CD14-positive monocyte (primary cell): ENCODE measurements at regions of chr22 and their contacts with region 1.

Region 1: GRCh38 chr22:29883045-29883774 is at the start of gene MTMR3:
- DNase-seq: peak; percentile 89 to 94 (median 90)
- H3K4me3 ChIP-seq: peak within 1 kb of the TSS; percentile 77 to 96 (median 95)
- H3K4me3 Mint-ChIP-seq: no peak within 1 kb of the TSS
- H3K27ac ChIP-seq: peak within 1 kb of the TSS; percentile 84 to 92
- H3K27ac Mint-ChIP-seq: peak within 1 kb of the TSS in 6 of 7 donors; percentile 85 to 95 (median 92)
- H3K4me1 ChIP-seq: peaks cover 42 to 50% of the 10 kb centered on the region in 2 donors
- H3K4me1 Mint-ChIP-seq: peaks cover 7% of the 10 kb centered on the region
- H3K27me3 ChIP-seq: no peaks in the 10 kb centered on the region
- H3K27me3 Mint-ChIP-seq: peaks cover 0 to 5% (median 3%) of the 10 kb centered on the region in 3 donors
- CTCF ChIP-seq: peak; percentile 62
- polyA plus RNA-seq, gene MTMR3: 23.4 to 86.1 (median 30.2) TPM

Region 2: DNA sequence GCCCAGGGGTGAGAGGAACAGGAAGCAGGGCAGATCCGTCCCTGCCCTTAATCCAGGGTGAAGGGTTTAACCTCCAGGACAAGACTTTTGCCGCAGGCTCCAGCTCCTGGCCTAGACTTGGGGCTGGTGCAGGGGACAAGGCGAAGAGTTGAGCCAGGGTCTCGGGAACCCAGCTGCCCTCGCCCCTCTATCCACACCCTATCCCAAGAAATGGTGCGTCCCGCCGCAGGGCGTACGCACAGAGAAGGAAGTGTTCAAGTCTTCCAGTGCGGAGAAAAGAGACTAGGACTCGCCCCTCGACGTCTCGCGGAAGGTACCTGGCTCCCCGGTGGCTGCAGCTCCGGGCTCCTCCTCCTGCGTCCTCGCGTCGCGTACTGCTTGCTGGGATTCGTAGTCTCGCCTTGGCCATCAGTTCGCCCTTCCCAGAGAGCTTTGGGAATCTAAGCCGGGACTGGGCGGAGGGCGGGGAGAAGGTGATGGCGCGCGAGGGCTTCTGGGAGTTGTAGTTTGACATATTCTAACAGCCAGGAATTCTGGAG is 116.5 kb before region 1 on chr22 and contains the start of gene ZMAT5:
- intact Hi-C with region 1: loop called in 1 of 2 experiments (anchors 5 kb)
- DNase-seq: peak; percentile 80 to 90 (median 88)
- H3K4me3 ChIP-seq: peak within 1 kb of the TSS; percentile 92 to 97 (median 96)
- H3K4me3 Mint-ChIP-seq: peak within 1 kb of the TSS; percentile 99
- H3K27ac ChIP-seq: peak within 1 kb of the TSS; percentile 37 to 92
- H3K27ac Mint-ChIP-seq: peak within 1 kb of the TSS; percentile 91 to 98 (median 96)
- H3K4me1 ChIP-seq: peaks cover 21 to 27% of the 10 kb centered on the region in 2 donors
- H3K4me1 Mint-ChIP-seq: peaks cover 33% of the 10 kb centered on the region
- H3K27me3 ChIP-seq: no peaks in the 10 kb centered on the region
- H3K27me3 Mint-ChIP-seq: peaks cover 0 to 1% (median 0%) of the 10 kb centered on the region in 3 donors
- CTCF ChIP-seq: no peak
- polyA plus RNA-seq, gene ZMAT5: 27.1 to 79.4 (median 59.3) TPM

Region 3: DNA sequence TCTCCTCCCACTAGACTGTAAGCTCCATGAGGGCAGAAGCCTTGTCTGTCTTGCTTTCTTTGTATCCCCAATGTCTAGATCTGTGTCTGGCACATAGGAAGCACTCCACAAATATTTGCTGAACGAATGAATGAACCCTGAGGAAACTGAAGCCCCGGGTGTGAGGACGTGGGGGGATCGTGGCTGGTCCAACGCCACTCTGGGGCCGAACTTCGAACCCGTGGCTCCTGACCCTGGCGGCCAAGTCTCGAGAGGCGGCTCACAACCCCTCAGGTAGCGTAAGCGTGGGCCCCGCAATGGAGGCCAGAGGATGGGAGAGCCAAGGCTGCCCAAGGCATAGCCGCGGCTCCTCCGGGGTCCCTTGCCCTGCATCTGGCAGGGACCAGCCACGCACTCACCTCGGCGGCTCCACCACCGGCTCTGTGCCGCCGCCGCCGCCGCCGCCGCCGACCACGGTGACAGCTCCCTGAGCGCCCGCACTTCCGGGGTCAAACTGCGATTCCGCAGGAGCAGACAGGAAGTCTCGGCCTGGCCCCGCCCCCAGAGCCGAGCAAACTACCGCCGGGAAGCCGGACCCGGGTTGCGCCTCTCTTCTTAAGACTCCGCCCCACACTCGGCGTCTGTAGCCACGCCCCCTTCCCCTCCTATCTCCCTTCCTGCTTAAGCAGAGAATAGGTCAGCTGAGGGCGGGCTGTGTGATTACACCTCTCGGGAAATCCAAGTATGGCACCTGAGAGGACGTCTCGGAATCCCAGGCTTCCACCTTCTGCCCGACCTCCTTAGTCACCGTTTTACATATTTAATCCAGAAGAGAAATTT is 45.2 kb before region 1 on chr22 and contains the start of gene ASCC2:
- intact Hi-C with region 1: loop called (anchors 1 to 10 kb)
- DNase-seq: peak; percentile 98 to 100 (median 99)
- H3K4me3 ChIP-seq: peak within 1 kb of the TSS; percentile 84 to 96 (median 94)
- H3K4me3 Mint-ChIP-seq: peak within 1 kb of the TSS; percentile 81 to 90
- H3K27ac ChIP-seq: peak within 1 kb of the TSS; percentile 83 to 92
- H3K27ac Mint-ChIP-seq: peak within 1 kb of the TSS; percentile 95 to 98 (median 98)
- H3K4me1 ChIP-seq: peaks cover 20 to 22% of the 10 kb centered on the region in 2 donors
- H3K4me1 Mint-ChIP-seq: peaks cover 33% of the 10 kb centered on the region
- H3K27me3 ChIP-seq: no peaks in the 10 kb centered on the region
- H3K27me3 Mint-ChIP-seq: peaks cover 0 to 3% (median 0%) of the 10 kb centered on the region in 3 donors
- CTCF ChIP-seq: no peak
- polyA plus RNA-seq, gene ASCC2: 23.8 to 77.2 (median 39.6) TPM

Region 4: DNA sequence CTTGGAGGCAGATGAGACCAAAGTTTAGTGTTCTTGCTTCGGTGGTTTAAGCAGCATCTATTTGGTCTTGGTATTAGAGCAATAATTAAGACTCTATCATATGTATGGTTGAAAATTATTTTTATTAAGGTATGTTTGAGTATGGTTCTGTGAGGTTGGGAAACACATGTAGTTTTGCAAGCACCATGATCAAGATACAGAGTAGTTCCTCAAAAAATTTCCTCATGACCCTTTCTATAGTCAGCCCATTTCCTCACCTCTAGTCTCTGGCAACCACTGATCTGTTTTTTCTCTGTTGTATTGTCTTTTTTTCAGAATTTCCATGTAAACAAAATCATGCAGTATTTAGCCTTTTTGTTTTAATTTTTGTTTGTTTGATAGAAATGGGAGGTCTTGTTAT is 18.1 kb after region 1 on chr22:
- intact Hi-C with region 1: loop called in 1 of 2 experiments (anchors 2 kb)
- DNase-seq: peak; percentile 69 to 87 (median 87)
- H3K4me3 ChIP-seq: peak overlapping the region in 1 of 3 experiments; percentile 51
- H3K4me3 Mint-ChIP-seq: peak overlapping the region in 1 of 2 donors; percentile 68
- H3K27ac ChIP-seq: peak overlapping the region; percentile 15 to 79
- H3K27ac Mint-ChIP-seq: peak overlapping the region; percentile 84 to 93 (median 91)
- H3K4me1 ChIP-seq: peaks cover 47 to 70% of the 10 kb centered on the region in 2 donors
- H3K4me1 Mint-ChIP-seq: peaks cover 65% of the 10 kb centered on the region
- H3K27me3 ChIP-seq: no peaks in the 10 kb centered on the region
- H3K27me3 Mint-ChIP-seq: no peaks in the 10 kb centered on the region
- CTCF ChIP-seq: no peak

Region 5: GRCh38 chr22:30423982-30424963 is 541.1 kb after region 1 on chr22:
- intact Hi-C with region 1: loop called in 1 of 2 experiments (anchors 10 kb)
- DNase-seq: peak; percentile 99 to 100 (median 99)
- H3K4me3 ChIP-seq: peak overlapping the region; percentile 54 to 88 (median 78)
- H3K4me3 Mint-ChIP-seq: peak overlapping the region; percentile 92 to 96
- H3K27ac ChIP-seq: peak overlapping the region; percentile 81 to 97
- H3K27ac Mint-ChIP-seq: peak overlapping the region; percentile 93 to 98 (median 97)
- H3K4me1 ChIP-seq: peaks cover 40 to 46% of the 10 kb centered on the region in 2 donors
- H3K4me1 Mint-ChIP-seq: peaks cover 40% of the 10 kb centered on the region
- H3K27me3 ChIP-seq: no peaks in the 10 kb centered on the region
- H3K27me3 Mint-ChIP-seq: peaks cover 0 to 2% (median 0%) of the 10 kb centered on the region in 3 donors
- CTCF ChIP-seq: no peak